ENCODE measurements at regions of chr6 and their contacts with region 1.

Region 1: DNA sequence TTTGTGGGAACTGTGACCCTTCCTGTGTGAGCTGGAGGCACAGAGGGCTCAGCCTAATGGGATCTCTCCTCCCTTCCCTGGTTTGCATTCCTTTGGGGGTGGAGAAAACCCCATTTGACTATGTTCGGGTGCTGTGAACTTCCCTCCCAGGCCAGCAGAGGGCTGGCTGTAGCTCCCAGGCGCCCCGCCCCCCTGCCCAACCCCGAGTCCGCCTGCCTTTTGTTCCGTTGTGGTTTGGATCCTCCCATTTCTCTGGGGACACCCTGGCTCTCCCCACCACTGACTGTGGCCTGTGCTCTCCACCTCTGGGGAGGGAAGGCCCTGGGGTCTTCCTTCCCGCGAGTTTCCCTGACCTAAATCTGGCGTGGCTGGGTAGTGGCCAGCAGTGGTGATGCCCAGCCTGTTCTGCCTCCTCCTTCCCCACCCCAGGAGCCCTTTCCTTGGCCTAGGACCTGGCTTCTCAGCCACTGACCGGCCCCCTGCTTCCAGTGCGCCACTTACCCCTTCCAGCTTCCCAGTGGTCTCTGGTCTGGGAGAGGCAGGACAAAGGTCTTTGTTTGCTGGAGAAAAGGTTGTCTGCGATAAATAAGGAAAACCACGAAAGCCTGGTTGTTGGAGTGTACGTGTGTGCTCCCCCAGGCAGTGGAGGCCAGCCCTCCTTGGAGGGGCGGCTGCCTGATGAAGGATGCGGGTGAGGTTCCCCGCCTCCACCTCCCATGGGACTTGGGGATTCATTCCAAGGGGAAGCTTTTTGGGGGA is 4.9 kb downstream of the VEGFA start:
- DNase-seq: peak; percentile 61
- ATAC-seq: peak; percentile 34
- H3K4me3 ChIP-seq: peak overlapping the region; percentile 94
- H3K27ac ChIP-seq: peak overlapping the region; percentile 92
- H3K4me1 ChIP-seq: peaks cover 23% of the 10 kb centered on the region
- H3K27me3 ChIP-seq: no peaks in the 10 kb centered on the region
- CTCF ChIP-seq: peak; percentile 83
- POLR2A ChIP-seq: no peak
- RAD21 ChIP-seq: peak; percentile 61

Region 2: GRCh38 chr6:43541774-43542471 is 233.0 kb before region 1 on chr6:
- CTCF ChIA-PET with region 1: no interaction called
- POLR2A ChIA-PET with region 1: no interaction called
- dilution Hi-C with region 1: no loop called
- in situ Hi-C with region 1: no loop called
- intact Hi-C with region 1: no loop called
- DNase-seq: no peak
- ATAC-seq: no peak
- H3K4me3 ChIP-seq: no peak overlapping the region
- H3K27ac ChIP-seq: no peak overlapping the region
- H3K4me1 ChIP-seq: no peaks in the 10 kb centered on the region
- H3K27me3 ChIP-seq: no peaks in the 10 kb centered on the region
- CTCF ChIP-seq: no peak
- POLR2A ChIP-seq: no peak
- RAD21 ChIP-seq: no peak

Region 3: DNA sequence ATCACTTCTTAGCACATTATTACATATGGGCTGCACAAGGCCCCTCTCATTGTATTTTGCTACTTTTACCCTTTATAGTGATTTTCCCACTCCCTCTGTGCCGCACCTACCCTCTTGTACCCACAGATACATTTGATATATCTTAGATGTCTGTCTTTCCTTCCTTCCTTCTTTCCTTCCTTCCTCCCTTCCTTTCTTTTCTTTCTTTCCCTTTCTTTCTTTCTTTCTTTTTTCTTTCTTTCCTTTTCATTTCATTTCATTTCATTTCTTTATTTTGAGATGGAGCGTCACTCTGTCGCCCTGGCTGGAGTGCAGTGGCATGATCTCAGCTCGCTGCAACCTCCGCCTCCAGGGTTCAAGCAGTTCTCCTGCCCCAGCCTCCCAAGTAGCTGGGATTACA is 186.8 kb before region 1 on chr6:
- CTCF ChIA-PET with region 1: no interaction called
- POLR2A ChIA-PET with region 1: no interaction called
- dilution Hi-C with region 1: no loop called
- in situ Hi-C with region 1: no loop called
- intact Hi-C with region 1: no loop called
- DNase-seq: no peak
- ATAC-seq: no peak
- H3K4me3 ChIP-seq: no peak overlapping the region
- H3K27ac ChIP-seq: no peak overlapping the region
- H3K4me1 ChIP-seq: no peaks in the 10 kb centered on the region
- H3K27me3 ChIP-seq: no peaks in the 10 kb centered on the region
- CTCF ChIP-seq: no peak
- POLR2A ChIP-seq: no peak
- RAD21 ChIP-seq: no peak

Region 4: DNA sequence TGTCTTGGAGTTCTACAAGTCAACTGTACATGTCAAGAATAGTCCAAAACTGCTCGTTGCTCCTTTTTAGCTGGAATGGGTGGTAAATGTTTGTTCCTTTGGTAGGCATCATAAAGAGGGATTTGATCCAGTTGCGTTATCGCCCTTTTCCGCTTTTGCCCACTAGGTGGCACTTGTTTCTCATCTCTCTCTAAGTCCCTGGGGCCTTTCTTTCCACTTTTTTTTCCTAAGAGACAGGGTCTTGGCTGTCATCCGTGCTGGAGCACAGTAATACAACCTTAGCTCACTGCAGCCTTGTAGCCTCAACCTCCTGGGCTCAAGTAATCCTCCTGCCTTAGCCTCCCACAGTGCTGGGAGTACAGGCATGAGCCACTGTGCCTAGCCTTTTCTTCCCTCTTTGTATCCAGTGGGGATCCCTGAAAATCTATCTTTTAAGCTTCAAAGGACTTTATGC is 166.6 kb before region 1 on chr6:
- CTCF ChIA-PET with region 1: no interaction called
- POLR2A ChIA-PET with region 1: no interaction called
- dilution Hi-C with region 1: no loop called
- in situ Hi-C with region 1: no loop called
- intact Hi-C with region 1: loop called (anchors 1 kb)
- DNase-seq: peak; percentile 86
- ATAC-seq: peak; percentile 81
- H3K4me3 ChIP-seq: no peak overlapping the region
- H3K27ac ChIP-seq: no peak overlapping the region
- H3K4me1 ChIP-seq: no peaks in the 10 kb centered on the region
- H3K27me3 ChIP-seq: no peaks in the 10 kb centered on the region
- CTCF ChIP-seq: peak; percentile 72
- POLR2A ChIP-seq: no peak
- RAD21 ChIP-seq: peak; percentile 68

Region 5: GRCh38 chr6:43723737-43724295 is 51.1 kb before region 1 on chr6:
- CTCF ChIA-PET with region 1: interaction called, 3 read pairs
- POLR2A ChIA-PET with region 1: no interaction called
- dilution Hi-C with region 1: no loop called
- in situ Hi-C with region 1: no loop called
- intact Hi-C with region 1: loop called (anchors 1 kb)
- DNase-seq: peak; percentile 70
- ATAC-seq: peak; percentile 77
- H3K4me3 ChIP-seq: no peak overlapping the region
- H3K27ac ChIP-seq: no peak overlapping the region
- H3K4me1 ChIP-seq: peaks cover 20% of the 10 kb centered on the region
- H3K27me3 ChIP-seq: peaks cover 12% of the 10 kb centered on the region
- CTCF ChIP-seq: peak; percentile 70
- POLR2A ChIP-seq: no peak
- RAD21 ChIP-seq: peak; percentile 81

Region 6: GRCh38 chr6:43951063-43951755 is 176.3 kb after region 1 on chr6:
- CTCF ChIA-PET with region 1: interaction called, 5 read pairs
- POLR2A ChIA-PET with region 1: interaction called, 3 read pairs
- dilution Hi-C with region 1: no loop called
- in situ Hi-C with region 1: no loop called
- intact Hi-C with region 1: loop called (anchors 2 kb)
- DNase-seq: no peak
- ATAC-seq: peak; percentile 76
- H3K4me3 ChIP-seq: no peak overlapping the region
- H3K27ac ChIP-seq: no peak overlapping the region
- H3K4me1 ChIP-seq: peaks cover 13% of the 10 kb centered on the region
- H3K27me3 ChIP-seq: no peaks in the 10 kb centered on the region
- CTCF ChIP-seq: peak; percentile 47
- POLR2A ChIP-seq: no peak
- RAD21 ChIP-seq: peak; percentile 56

Region 7: DNA sequence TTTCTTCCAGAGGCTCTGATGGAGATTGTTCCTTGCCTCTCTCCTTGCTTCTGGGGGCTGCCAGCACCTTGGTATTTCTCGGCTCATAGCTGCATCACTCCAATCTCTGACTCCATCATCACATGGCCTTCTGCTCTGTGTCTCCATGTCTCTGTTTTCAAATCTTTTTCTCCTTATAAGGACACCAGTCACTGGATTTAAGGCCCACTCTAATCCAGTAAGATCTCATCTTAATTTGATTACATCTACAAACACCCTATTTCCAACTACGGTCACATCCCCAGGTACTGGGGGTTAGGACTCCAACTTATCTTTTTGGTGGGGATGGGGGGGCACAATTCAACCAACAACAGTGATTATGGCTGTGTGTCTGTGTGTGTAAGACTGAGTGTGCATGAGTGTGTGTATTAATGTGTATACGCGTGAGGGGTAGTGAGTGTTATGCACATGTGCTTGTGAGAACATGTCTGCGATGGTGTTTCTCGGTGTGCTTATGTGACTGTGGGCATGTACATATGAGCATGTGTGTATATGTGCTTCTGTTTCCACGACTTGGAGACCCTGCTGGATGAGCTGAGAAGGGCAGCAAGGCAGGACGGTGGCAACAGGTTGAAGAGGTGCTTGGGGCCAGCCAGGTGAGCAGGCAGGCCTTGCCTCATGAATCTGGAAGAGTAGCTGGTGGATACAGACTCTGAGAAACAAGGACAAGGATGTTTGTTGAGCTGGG is 221.8 kb after region 1 on chr6:
- CTCF ChIA-PET with region 1: interaction called, 9 read pairs
- POLR2A ChIA-PET with region 1: no interaction called
- dilution Hi-C with region 1: no loop called
- in situ Hi-C with region 1: no loop called
- intact Hi-C with region 1: loop called (anchors 2 kb)
- DNase-seq: no peak
- ATAC-seq: no peak; the same call in 1 of the 2 replicates
- H3K4me3 ChIP-seq: no peak overlapping the region
- H3K27ac ChIP-seq: peak overlapping the region; percentile 39; the same call in 1 of the 2 replicates
- H3K4me1 ChIP-seq: peaks cover 8% of the 10 kb centered on the region
- H3K27me3 ChIP-seq: no peaks in the 10 kb centered on the region
- CTCF ChIP-seq: no peak
- POLR2A ChIP-seq: no peak
- RAD21 ChIP-seq: no peak